AG04449 (cell line): ENCODE measurements at regions of chr7 and their contacts with region 1.

Region 1: DNA sequence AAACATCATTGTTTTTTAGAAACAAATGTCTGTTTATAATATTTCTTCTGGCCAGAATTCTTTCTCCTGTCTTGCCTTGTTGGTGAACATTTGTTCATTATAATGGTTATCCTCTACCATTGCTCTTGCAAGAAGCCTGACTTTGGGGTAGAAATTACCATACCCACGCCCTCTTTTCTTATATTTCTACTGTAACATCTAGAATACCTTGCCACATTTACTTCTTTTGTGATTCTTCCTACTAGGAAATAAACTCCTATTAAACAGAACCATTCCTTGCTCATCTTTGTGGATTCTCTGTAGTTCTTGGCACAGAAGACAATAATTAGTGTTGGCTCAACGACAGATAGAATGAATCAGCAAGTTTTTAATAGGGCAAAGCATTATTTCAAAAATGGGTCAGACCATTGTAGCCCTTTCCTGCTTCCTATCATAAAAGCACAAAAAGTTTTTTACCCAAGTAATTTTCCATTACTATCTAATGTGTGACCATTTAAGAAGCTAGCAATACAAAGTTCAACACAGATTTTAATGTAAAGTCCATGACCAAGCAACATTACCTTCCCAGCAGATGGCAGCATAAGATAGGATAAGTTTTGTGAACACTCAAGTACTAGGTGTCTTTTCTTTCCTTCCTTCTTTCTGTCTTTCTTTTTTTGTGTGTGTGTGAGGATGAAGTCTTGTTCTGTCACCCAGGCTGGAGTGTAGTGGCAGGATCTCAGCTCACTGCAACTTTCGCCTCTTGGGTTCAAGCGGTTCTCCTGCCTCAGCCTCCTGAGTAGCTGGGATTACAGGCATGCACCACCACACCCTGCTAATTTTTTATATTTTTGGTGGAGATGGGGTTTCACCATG is 270.4 kb downstream of the HGF start:
- DNase-seq: peak; percentile 59
- H3K4me3 ChIP-seq: no peak overlapping the region
- CTCF ChIP-seq: peak; percentile 55

Region 2: GRCh38 chr7:80883188-80884025 is 616.1 kb before region 1 on chr7:
- CTCF ChIA-PET with region 1: no interaction called
- POLR2A ChIA-PET with region 1: no interaction called
- DNase-seq: peak; percentile 98
- H3K4me3 ChIP-seq: no peak overlapping the region
- CTCF ChIP-seq: no peak

Region 3: DNA sequence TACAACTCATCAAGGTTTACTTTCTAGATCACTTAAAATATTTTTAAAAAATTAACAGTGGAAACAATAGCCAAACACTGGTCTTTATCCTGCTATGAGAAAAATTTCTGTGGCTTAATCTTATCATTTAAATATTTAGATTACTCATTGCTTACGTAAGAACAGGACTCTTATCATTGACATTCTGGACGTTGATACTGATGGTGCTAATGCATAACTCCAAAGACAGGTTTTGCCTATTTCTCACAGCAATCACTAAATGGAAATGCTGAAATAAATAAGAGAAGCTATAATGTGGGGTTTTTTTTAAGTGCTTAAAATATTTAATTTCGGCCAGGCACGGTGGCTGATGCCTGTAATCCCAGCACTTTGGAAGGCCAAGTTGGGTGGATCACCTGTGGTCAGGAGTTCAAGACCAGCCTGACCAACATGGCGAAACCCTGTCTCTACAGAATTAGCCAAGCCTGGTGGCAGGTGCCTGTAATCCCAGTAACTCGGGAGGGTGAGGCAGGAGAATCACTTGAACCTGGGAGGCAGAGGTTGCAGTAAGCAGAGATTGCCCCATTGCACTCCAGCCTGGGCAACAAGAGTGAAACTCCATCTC is 75.3 kb after region 1 on chr7:
- CTCF ChIA-PET with region 1: no interaction called
- POLR2A ChIA-PET with region 1: no interaction called
- DNase-seq: no peak
- H3K4me3 ChIP-seq: no peak overlapping the region
- CTCF ChIP-seq: no peak

Region 4: DNA sequence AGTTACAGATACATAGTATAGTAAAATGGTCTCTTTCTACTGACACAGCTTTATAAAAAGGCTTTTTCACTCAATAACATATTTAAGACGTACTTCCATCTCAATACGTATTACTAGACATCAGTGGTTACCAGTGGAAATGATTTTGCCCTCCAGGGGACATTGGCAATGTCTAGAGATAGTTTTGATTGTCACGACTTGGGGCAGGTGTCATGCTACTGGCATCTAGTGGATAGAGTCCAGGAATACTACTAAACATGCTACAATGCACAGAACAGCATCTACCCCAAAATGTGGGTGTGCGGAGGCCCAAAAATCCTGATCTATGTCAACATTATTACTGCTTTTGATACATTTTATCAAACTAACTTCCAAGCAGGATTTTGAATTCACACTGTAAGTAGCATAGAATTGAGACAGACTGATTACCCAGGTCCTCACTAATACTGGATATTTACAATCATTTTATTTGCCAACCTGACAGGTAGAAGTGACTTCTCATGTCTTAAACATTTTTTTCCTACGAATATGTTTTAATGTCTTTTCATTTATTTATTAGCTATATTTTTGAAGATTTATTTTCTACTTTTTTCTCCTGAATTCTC is 216.6 kb after region 1 on chr7:
- CTCF ChIA-PET with region 1: interaction called, 55 read pairs
- POLR2A ChIA-PET with region 1: no interaction called
- DNase-seq: no peak
- H3K4me3 ChIP-seq: no peak overlapping the region
- CTCF ChIP-seq: peak; percentile 52

Region 5: GRCh38 chr7:81956520-81956919 is 457.0 kb after region 1 on chr7:
- CTCF ChIA-PET with region 1: interaction called, 114 read pairs
- POLR2A ChIA-PET with region 1: no interaction called
- DNase-seq: no peak
- H3K4me3 ChIP-seq: no peak overlapping the region
- CTCF ChIP-seq: peak; percentile 50

Region 6: GRCh38 chr7:82029236-82029913 is 529.9 kb after region 1 on chr7:
- CTCF ChIA-PET with region 1: interaction called, 19 read pairs
- POLR2A ChIA-PET with region 1: no interaction called
- DNase-seq: no peak
- H3K4me3 ChIP-seq: no peak overlapping the region
- CTCF ChIP-seq: no peak

Region 7: GRCh38 chr7:82605247-82605872 is 1105.9 kb after region 1 on chr7:
- CTCF ChIA-PET with region 1: interaction called, 19 read pairs
- POLR2A ChIA-PET with region 1: no interaction called
- DNase-seq: no peak
- H3K4me3 ChIP-seq: no peak overlapping the region
- CTCF ChIP-seq: peak; percentile 66